Activated CD4-positive, alpha-beta memory T cell treated with anti-CD3 and anti-CD28 coated beads, Interleukin-2, amount 10 ng/mL, durations not matched to agents 7 days and 5 days (primary cell): ENCODE measurements at regions of chr7 and their contacts with region 1.

Region 1: DNA sequence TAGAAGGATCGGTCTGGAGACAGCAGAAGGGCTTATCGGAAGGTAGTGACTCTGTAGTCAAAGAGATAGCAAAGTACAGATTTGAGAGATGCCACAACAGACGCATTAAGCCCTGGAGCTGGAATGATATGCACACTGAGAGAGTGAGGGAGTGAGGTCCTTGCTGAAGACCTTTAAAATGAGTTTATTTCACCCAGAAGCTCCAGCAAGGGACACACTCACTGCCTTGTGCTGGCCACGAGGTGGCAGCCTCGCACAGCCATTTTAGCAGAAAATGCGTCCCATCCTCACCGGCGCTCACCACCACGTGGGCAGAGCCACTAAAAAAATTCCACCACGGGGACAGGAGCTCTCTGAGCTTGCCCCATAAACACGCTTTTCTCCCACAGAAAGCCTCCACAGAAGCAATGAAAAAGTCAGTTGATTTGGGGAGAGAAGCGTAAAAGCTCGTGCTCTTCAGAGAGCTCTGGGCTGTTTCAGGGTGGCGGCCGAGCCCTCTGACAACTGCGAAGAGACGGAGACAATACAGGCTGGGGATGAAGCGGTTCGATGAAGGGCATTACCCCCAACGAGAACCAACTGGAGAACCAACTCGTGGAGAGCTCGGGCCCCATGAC is 163.0 kb upstream of the KLF14 start:
- DNase-seq: peak; percentile 76
- H3K4me3 Mint-ChIP-seq: no peak overlapping the region
- H3K27ac Mint-ChIP-seq: peak overlapping the region; percentile 74
- H3K4me1 Mint-ChIP-seq: peaks cover 86% of the 10 kb centered on the region
- H3K27me3 Mint-ChIP-seq: no peaks in the 10 kb centered on the region

Region 2: DNA sequence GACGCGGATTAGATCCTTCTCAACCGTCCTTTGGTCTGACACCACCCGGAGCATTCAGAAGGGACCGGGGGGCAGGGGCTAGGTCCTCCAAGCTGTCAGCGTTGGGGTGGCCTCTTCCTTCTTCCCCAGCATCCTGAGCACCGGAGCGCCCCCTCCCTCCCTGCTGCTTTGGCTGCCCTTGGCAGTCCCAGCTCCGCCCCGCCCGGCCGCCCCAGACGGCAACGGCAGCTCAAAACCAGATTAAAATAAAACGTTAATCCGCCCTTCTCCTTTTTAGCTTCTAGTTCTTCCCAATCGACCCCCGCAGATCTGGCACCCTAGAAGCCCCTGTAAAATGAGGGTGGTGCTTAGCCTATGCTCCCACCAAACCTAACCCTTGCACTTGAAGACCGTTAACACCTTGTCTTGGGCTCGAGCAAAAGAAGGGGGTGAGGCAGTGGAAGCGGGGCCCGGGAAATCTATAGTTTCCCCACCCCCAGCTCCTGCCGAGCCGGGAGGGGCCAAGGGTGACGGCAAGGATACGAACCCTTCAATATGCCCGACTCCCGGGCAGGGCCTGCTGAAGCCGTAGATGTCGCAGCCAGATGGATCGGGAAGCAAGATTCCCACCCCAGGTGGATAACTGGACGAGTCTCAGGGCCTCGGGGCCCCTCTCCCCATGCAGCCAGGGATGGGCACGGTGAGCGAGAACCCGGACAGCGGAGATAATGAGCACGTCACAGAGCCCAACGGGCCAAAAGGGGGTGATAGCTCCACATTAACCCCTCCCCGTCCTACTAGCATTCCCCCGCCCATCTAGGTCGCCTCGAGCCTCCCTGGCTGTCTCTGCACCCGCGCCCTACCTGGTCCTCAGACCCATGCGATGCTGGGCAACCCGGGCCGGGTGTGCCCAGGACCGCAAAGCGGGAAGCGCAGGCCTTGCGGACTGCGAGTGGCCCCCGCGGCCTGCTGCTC is 1115.8 kb before region 1 on chr7:
- CTCF ChIA-PET with region 1: no interaction called
- POLR2A ChIA-PET with region 1: no interaction called
- DNase-seq: no peak
- H3K4me3 Mint-ChIP-seq: peak overlapping the region; percentile 74
- H3K27ac Mint-ChIP-seq: peak overlapping the region; percentile 11
- H3K4me1 Mint-ChIP-seq: peaks cover 44% of the 10 kb centered on the region
- H3K27me3 Mint-ChIP-seq: peaks cover 69% of the 10 kb centered on the region

Region 3: DNA sequence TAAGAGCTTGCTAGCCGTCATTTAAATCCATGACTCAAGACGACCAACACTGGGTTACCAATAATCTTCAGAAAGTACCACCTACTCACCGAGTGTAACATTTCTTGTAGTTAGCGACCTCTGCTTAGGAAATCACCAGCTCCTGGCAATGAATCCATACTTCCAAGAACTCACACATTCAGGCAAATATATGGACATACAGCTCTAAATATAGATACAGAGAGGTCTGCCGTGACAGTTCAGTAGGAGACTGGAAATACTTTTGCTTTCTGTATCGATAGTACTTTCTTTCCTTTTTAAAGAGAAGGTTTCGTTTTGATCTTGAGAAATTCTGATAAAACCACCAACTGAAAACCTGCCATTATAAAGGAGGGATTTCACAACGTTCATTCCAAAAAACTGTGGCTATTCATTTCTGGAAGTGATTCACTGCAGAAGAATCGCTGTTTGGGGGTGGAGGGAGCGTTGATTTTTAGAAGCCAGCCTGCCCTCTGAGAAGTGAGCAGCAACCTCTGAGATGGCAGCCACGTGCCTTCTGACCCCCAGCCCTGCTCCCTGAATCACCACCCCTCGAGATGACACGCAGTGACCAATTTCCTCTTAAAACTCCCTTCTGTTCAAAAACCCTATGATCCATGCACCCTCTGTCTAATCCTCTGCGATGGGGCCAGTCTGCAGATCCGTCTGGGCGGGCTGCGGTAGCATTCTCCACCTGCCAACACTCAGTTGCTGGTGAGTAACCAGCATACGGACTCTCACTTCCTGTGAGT is 16.0 kb after region 1 on chr7:
- CTCF ChIA-PET with region 1: no interaction called
- POLR2A ChIA-PET with region 1: interaction called, 46 read pairs
- DNase-seq: peak; percentile 87
- H3K4me3 Mint-ChIP-seq: peak overlapping the region; percentile 84
- H3K27ac Mint-ChIP-seq: peak overlapping the region; percentile 97
- H3K4me1 Mint-ChIP-seq: peaks cover 92% of the 10 kb centered on the region
- H3K27me3 Mint-ChIP-seq: no peaks in the 10 kb centered on the region

Region 4: DNA sequence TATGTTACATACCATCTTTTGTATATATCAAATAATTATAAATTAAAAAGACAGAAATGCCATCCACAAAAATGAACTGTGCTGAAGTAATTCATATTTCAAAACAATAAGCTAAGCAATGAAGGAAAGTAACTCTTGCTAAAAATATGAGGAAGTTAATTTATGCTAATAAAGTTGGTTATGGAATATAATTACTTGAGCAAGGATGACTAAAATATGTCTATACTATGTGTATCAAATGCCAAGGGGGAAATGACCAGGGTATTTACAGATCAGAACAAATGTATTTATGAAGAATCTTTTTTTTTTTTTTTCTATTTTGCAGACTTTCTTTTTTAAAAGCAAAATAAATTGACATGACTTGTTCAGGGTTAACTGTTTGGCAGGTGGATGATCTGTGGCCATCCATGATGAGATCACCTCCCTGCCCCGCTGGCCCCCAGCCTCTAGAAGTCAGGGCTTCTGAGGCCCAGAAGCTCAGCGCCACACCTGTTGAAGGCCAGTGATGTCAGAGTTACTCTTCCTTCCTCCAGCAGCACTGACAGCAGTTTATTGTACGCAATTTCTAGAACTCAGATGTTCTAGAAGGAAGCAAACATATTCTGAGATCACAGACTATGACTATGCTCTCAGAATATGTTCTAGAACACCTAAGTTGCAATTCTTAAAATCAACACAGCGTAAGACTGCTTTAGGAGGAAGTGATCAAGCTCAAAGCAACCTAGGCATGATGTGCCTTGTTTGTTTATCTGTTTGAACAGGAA is 33.1 kb after region 1 on chr7:
- CTCF ChIA-PET with region 1: interaction called, 28 read pairs
- POLR2A ChIA-PET with region 1: interaction called, 6 read pairs
- DNase-seq: no peak
- H3K4me3 Mint-ChIP-seq: no peak overlapping the region
- H3K27ac Mint-ChIP-seq: peak overlapping the region; percentile 84
- H3K4me1 Mint-ChIP-seq: peaks cover 92% of the 10 kb centered on the region
- H3K27me3 Mint-ChIP-seq: no peaks in the 10 kb centered on the region

Region 5: GRCh38 chr7:130961128-130961601 is 64.2 kb after region 1 on chr7:
- CTCF ChIA-PET with region 1: interaction called, 66 read pairs
- POLR2A ChIA-PET with region 1: interaction called, 60 read pairs
- DNase-seq: peak; percentile 86
- H3K4me3 Mint-ChIP-seq: peak overlapping the region; percentile 93
- H3K27ac Mint-ChIP-seq: peak overlapping the region; percentile 100
- H3K4me1 Mint-ChIP-seq: peaks cover 54% of the 10 kb centered on the region
- H3K27me3 Mint-ChIP-seq: no peaks in the 10 kb centered on the region

Region 6: DNA sequence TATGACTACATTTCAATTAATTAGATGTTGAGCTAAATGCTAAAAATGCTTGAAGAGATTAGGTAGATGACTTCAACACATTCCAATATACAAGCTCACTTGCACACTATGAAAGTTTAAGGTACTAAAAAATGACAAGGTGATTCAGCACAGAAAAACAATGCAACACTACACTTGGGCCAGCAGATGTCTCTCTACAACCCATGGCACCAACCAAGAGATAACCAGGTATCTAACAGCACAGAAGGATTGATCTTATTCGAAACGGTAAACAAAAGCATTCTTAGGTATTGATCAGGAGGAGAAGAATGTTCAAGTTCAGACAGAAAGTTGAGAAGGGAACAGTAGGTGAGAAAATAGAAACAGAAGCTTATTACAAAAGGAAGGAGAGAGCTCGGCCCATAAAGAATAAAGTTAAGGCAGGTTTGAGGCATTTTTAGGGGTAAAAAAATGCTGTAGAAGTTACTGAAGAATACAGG is 85.2 kb after region 1 on chr7:
- CTCF ChIA-PET with region 1: interaction called, 34 read pairs
- POLR2A ChIA-PET with region 1: interaction called, 18 read pairs
- DNase-seq: no peak
- H3K4me3 Mint-ChIP-seq: no peak overlapping the region
- H3K27ac Mint-ChIP-seq: no peak overlapping the region
- H3K4me1 Mint-ChIP-seq: peaks cover 46% of the 10 kb centered on the region
- H3K27me3 Mint-ChIP-seq: no peaks in the 10 kb centered on the region

Region 7: DNA sequence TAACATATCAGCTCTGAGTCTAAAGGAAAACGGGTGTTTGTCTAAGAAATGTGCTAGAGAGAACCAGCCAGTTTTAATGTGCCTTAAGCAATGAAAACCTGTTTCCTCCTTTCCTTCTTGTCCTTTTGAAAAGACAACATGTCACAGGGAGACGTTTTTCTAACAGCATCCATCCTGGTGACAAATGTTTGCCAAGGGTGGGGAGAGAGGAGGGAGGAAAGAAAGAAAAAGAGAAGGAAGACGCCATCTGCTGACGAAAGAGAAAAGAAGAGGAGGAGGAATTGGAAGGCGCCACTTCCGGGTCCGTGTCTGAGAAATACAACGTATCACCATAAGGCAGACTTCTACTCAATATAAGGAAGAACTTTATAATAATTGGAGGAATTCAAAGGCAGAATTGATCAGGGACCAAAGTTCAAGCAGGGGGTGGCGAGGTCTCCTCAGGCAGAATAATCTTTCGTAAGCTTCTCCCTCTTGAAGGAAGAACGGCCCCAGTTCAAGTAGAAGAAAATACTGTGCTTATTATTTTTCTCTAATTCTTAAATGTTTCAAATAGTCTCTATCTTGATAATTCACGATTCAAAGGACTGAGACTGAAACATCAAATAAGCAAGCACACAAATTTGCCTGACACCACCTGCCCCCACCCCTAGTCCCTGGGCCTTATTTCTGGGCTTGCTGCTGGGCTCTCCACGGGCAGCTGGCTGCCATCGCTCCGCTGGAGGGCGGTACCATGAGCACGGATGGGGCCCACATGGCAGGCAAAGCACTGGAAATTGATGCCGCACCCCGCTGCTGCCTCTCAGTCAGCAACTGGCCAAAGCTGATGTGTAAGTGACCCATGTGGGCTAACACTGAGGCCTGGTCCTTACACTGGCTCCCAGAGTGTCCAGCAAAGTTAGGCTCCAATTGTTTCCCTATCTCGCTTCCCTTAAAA is 110.7 kb after region 1 on chr7:
- CTCF ChIA-PET with region 1: interaction called, 25 read pairs
- POLR2A ChIA-PET with region 1: interaction called, 6 read pairs
- DNase-seq: peak; percentile 72
- H3K4me3 Mint-ChIP-seq: peak overlapping the region; percentile 41
- H3K27ac Mint-ChIP-seq: peak overlapping the region; percentile 81
- H3K4me1 Mint-ChIP-seq: peaks cover 80% of the 10 kb centered on the region
- H3K27me3 Mint-ChIP-seq: no peaks in the 10 kb centered on the region

Region 8: DNA sequence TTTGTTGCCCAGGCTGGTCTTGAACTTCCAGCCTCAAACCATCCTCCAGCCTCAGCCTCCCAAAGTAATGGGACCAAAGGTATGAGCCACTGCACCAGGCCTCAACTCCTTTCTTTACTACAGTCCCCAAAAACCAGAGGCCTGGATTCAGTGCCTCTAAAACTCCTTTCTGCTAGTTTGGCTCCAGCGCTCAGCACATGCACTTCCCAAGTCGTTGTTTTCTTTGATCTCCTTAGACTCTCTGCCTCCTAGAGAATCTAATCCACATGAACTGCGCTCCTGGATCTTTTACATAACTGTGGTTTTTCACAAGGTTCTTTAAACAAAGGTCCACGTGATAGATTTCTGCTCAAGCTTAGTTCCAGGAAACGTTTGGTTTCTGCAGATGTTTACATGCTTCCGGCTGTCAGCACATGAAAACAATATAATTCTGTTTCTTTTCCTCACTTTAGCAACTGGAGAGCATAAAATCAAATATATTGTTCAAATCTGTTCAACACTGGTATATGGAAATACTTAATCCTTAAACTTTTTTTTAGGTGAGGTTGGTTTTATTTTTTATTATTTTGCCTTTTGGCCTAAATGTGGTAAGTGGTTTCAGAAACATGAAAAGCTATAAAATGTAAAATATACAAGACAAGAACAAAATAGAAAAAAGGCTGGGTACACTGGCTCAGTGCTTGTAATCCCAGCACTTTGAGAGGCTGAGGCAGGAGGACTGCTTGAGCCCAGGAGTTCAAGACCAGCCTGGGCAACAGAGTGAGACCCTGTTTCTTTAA is 160.2 kb after region 1 on chr7:
- CTCF ChIA-PET with region 1: interaction called, 10 read pairs
- POLR2A ChIA-PET with region 1: interaction called, 3 read pairs
- DNase-seq: peak; percentile 34
- H3K4me3 Mint-ChIP-seq: peak overlapping the region; percentile 72
- H3K27ac Mint-ChIP-seq: peak overlapping the region; percentile 96
- H3K4me1 Mint-ChIP-seq: peaks cover 57% of the 10 kb centered on the region
- H3K27me3 Mint-ChIP-seq: no peaks in the 10 kb centered on the region